Left lung (tissue), 14 donors: ENCODE measurements at regions of chr5 and their contacts with region 1.

Region 1: DNA sequence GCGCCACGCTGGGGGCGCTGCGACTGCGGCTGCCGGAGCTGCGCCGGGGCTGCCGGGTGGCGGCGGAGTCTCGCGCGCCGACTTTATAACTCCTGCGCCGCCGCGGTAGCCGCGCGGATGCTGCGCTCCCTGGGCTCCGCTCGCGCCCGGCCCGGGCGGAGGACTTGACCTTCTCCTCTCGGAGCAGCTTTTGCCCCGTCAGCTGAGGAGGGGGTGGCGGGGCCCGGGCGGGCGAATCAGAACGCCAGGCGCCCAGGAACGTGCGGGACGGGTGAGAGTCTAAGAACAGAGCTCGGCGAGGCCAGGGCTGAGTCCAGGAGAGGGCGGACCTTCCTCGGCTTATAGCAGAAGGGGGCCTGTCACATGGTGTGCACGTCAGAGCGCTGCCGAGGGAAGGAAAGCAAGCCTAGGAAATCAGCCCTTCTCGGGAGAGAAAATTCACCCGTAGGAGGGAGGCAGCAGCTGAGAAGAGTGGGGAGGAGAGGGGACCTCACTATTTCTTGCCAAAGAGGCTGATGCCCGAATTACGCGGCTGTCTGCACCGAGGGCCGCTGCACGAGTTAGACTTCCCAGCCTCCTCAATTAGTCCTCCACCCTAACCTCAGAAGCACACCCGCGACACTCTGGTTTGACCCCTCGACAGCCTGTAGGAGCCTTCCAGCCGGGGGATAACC is at the start of gene FOXD1:
- DNase-seq: peak in 3 of 4 donors; percentile 55 to 83 (median 82)
- ATAC-seq: peak; percentile 69
- H3K4me3 ChIP-seq: peak within 1 kb of the TSS; percentile 13 to 33
- H3K27ac ChIP-seq: no peak within 1 kb of the TSS
- H3K4me1 ChIP-seq: peaks cover 4 to 26% of the 10 kb centered on the region in 2 donors
- H3K27me3 ChIP-seq: peaks cover 88 to 96% of the 10 kb centered on the region in 2 donors
- CTCF ChIP-seq: no peak
- polyA plus RNA-seq, gene FOXD1: 0.09 to 0.10 TPM in 2 of 6 donors, not detected in the others

Region 2: DNA sequence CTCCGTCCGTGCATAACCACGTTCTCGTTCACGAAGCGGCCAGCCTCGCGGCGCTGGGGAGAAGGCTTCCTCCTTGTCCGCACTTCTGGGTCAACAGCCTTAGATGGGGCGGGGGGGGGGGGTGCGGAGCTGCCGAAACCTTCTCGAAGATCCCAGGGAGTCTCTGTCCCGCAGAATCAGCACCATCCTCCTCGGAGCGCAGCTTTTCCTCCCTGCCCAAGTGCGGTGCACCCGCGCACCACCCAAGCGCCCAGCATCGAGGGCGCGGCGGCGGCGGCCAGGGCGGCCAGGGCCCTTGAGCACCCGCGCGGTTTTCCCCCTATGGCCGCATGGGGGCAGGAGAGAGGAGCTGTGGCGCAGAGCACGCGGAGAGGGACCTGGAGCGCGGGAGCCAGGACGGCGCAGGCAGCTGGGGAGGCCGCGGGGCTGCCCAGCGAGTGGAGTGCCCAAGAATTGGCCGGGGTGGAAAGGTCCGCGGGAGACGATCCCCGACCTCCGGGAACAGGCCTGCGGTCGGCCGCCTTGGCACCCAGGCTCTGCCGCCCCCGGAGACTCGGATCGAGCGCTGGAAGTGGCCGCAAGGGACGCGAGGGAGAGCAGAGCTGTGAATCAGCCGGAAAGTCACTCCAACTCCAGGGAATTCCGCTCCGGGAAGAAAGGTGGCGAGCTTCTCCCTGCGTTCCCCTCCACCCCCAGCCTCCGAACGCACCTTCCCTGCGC is 232.5 kb before region 1 on chr5:
- intact Hi-C with region 1: loop called in 1 of 2 experiments (anchors 5 kb)
- DNase-seq: peak; percentile 68 to 92 (median 81)
- ATAC-seq: peak; percentile 100
- H3K4me3 ChIP-seq: peak overlapping the region in 1 of 2 donors; percentile 29
- H3K27ac ChIP-seq: no peak overlapping the region
- H3K4me1 ChIP-seq: peaks cover 0 to 13% of the 10 kb centered on the region in 2 donors
- H3K27me3 ChIP-seq: peaks cover 68 to 100% of the 10 kb centered on the region in 2 donors
- CTCF ChIP-seq: peak; percentile 75 to 83

Region 3: GRCh38 chr5:73540192-73540591 is 91.6 kb after region 1 on chr5:
- intact Hi-C with region 1: no loop called
- DNase-seq: no peak
- ATAC-seq: no peak
- H3K4me3 ChIP-seq: no peak overlapping the region
- H3K27ac ChIP-seq: no peak overlapping the region
- H3K4me1 ChIP-seq: no peaks in the 10 kb centered on the region
- H3K27me3 ChIP-seq: no peaks in the 10 kb centered on the region
- CTCF ChIP-seq: no peak